SK-N-SH (cell line): ENCODE measurements at regions of chr2 and their contacts with region 1.

Region 1: DNA sequence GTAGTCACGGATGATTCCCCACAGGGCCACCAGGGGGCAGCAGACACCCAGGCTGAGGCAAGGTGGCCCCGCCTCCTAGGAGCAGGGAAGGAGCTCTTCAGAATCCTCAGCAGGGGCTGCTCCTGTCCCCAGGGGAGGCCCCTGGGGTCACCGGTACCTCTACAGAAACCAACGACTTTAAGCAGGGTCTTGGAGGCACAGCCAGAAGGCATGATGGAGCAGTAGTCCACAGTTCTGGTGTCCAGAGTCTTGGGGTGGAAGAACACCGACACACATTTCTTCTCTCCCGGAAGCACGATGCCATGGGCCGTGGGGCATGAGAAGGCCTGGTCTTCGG is 11.5 kb downstream of the CFAP65 start:
- DNase-seq: peak; percentile 93
- H3K4me3 ChIP-seq: peak overlapping the region in 1 of 2 experiments; percentile 49; a peak in 1 of 4 replicates
- H3K27ac ChIP-seq: no peak overlapping the region; a peak in 1 of 4 replicates
- H3K4me1 ChIP-seq: peaks cover 0 to 5% of the 10 kb centered on the region in 2 experiments; a peak in 1 of 4 replicates
- H3K27me3 ChIP-seq: peaks cover 18% of the 10 kb centered on the region; the same call in 1 of the 2 replicates
- CTCF ChIP-seq: peak; percentile 84
- EP300 ChIP-seq: no peak
- RAD21 ChIP-seq: peak; percentile 91

Region 2: DNA sequence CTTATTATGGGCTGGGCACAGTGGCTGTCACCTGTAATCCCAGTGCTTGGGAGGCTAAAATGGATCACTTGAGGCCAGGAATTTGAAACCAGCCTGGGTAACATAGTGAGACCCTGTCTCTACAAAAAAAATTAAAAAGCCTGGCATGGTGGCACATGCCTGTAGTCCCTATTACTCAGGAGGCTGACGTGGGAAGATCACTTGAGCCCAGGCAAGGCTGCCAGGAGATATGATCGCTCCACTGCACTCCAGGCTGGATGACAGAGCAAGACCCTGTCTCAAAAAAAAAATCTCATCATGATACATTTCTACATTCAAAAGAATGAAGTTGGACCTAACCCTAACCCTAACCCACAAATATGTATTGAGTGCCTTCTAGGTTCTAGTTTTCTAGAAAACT is 268.0 kb before region 1 on chr2:
- CTCF ChIA-PET with region 1: no interaction called
- POLR2A ChIA-PET with region 1: no interaction called
- DNase-seq: no peak
- H3K4me3 ChIP-seq: no peak overlapping the region
- H3K27ac ChIP-seq: no peak overlapping the region
- H3K4me1 ChIP-seq: no peaks in the 10 kb centered on the region
- H3K27me3 ChIP-seq: no peaks in the 10 kb centered on the region
- CTCF ChIP-seq: no peak
- EP300 ChIP-seq: no peak
- RAD21 ChIP-seq: no peak

Region 3: DNA sequence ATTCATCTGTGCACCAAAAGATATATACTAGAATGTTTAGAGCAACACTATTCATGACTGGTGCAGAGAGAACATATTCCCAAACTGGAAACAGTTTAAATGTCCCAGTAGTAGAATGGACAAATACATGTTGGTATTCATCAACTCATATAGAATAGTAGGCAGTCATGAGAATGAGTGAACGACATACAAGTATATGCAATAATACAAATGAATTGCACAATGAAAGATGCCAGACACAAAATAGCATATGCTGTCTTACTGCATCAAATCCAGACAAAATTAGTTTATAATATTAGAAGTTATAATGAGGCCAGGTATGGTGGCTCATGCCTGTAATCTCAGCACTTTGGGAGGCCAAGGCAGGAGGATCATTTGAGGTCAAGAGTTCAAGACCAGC is 189.9 kb before region 1 on chr2:
- CTCF ChIA-PET with region 1: no interaction called
- POLR2A ChIA-PET with region 1: no interaction called
- DNase-seq: no peak
- H3K4me3 ChIP-seq: no peak overlapping the region
- H3K27ac ChIP-seq: no peak overlapping the region
- H3K4me1 ChIP-seq: no peaks in the 10 kb centered on the region; a peak in 1 of 4 replicates
- H3K27me3 ChIP-seq: no peaks in the 10 kb centered on the region; the same call in 1 of the 2 replicates
- CTCF ChIP-seq: no peak
- EP300 ChIP-seq: no peak
- RAD21 ChIP-seq: no peak

Region 4: GRCh38 chr2:218876562-218877219 is 153.1 kb before region 1 on chr2:
- CTCF ChIA-PET with region 1: interaction called, 10 read pairs
- POLR2A ChIA-PET with region 1: no interaction called
- DNase-seq: peak; percentile 88
- H3K4me3 ChIP-seq: no peak overlapping the region
- H3K27ac ChIP-seq: peak overlapping the region in 1 of 2 experiments; percentile 78; a peak in 2 of 4 replicates
- H3K4me1 ChIP-seq: peaks cover 0 to 54% of the 10 kb centered on the region in 2 experiments; a peak in 2 of 4 replicates
- H3K27me3 ChIP-seq: peaks cover 39% of the 10 kb centered on the region
- CTCF ChIP-seq: peak; percentile 95
- EP300 ChIP-seq: peak in 1 of 2 experiments; percentile 26; a peak in 1 of 4 replicates
- RAD21 ChIP-seq: peak; percentile 95

Region 5: GRCh38 chr2:219002395-219003266 is 27.2 kb before region 1 on chr2:
- CTCF ChIA-PET with region 1: interaction called, 258 read pairs
- POLR2A ChIA-PET with region 1: interaction called, 4 read pairs
- DNase-seq: peak; percentile 89
- H3K4me3 ChIP-seq: peak overlapping the region; percentile 51 to 54
- H3K27ac ChIP-seq: peak overlapping the region in 1 of 2 experiments; percentile 99; a peak in 2 of 4 replicates
- H3K4me1 ChIP-seq: peaks cover 0 to 60% of the 10 kb centered on the region in 2 experiments; a peak in 2 of 4 replicates
- H3K27me3 ChIP-seq: peaks cover 18% of the 10 kb centered on the region; the same call in 1 of the 2 replicates
- CTCF ChIP-seq: peak; percentile 35; the same call in 1 of the 2 replicates
- EP300 ChIP-seq: no peak
- RAD21 ChIP-seq: peak; percentile 66

Region 6: GRCh38 chr2:219057709-219058540 is 28.1 kb after region 1 on chr2:
- CTCF ChIA-PET with region 1: interaction called, 59 read pairs
- POLR2A ChIA-PET with region 1: no interaction called
- DNase-seq: peak; percentile 86
- H3K4me3 ChIP-seq: peak overlapping the region in 1 of 2 experiments; percentile 35; a peak in 1 of 4 replicates
- H3K27ac ChIP-seq: no peak overlapping the region
- H3K4me1 ChIP-seq: peaks cover 0 to 16% of the 10 kb centered on the region in 2 experiments; a peak in 1 of 4 replicates
- H3K27me3 ChIP-seq: peaks cover 43% of the 10 kb centered on the region
- CTCF ChIP-seq: peak; percentile 78
- EP300 ChIP-seq: no peak
- RAD21 ChIP-seq: peak; percentile 77

Region 7: GRCh38 chr2:219099329-219099728 is 69.5 kb after region 1 on chr2:
- CTCF ChIA-PET with region 1: interaction called, 34 read pairs
- POLR2A ChIA-PET with region 1: interaction called, 4 read pairs
- DNase-seq: no peak
- H3K4me3 ChIP-seq: no peak overlapping the region
- H3K27ac ChIP-seq: no peak overlapping the region
- H3K4me1 ChIP-seq: no peaks in the 10 kb centered on the region
- H3K27me3 ChIP-seq: no peaks in the 10 kb centered on the region
- CTCF ChIP-seq: no peak
- EP300 ChIP-seq: no peak
- RAD21 ChIP-seq: no peak

Region 8: GRCh38 chr2:219125225-219125885 is 95.6 kb after region 1 on chr2:
- CTCF ChIA-PET with region 1: interaction called, 238 read pairs
- POLR2A ChIA-PET with region 1: no interaction called
- DNase-seq: no peak
- H3K4me3 ChIP-seq: no peak overlapping the region
- H3K27ac ChIP-seq: no peak overlapping the region
- H3K4me1 ChIP-seq: no peaks in the 10 kb centered on the region; a peak in 2 of 4 replicates
- H3K27me3 ChIP-seq: no peaks in the 10 kb centered on the region
- CTCF ChIP-seq: no peak
- EP300 ChIP-seq: no peak
- RAD21 ChIP-seq: no peak

Region 9: DNA sequence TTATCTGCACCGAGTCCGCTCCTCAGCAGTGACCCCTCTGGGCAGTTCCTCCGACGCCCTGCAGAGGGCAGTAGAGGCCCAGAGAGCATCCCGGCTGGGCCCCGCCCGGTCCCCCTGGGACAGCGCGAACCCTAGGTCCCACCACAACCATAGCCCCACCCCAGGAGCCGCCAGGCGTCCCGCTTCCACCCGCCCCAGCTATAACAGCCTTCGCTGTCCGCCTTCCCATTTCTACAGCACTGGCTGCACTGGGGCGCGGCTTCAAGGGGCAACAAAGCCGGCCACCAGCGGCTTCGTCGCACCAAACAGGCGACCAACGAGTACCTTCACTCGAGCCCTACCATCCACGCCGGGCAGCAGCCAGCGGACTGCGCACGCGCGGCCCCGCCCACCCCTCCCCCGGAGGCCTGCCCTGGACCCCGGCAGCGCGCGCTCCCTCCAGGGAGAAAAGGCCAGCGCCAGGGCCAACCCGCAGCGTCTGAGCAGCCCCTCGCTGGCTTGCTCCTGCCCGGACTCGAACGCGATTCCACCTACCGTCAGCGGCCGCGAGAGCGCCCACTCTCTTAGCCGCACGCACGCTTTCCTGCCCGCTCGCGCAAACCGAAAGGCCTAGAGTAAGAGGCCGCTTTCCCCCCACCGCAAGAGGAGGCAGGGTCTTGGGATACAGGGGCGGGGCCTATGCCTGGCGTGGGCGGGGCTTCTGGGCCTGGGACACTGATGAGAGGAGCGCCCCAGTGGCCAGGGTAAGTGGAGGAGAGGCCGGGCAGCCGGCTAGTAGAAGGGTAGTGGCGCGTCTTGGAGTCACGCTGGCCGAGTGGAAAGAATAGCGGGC is 130.6 kb after region 1 on chr2 and contains the start of gene NHEJ1:
- CTCF ChIA-PET with region 1: interaction called, 114 read pairs
- POLR2A ChIA-PET with region 1: no interaction called
- DNase-seq: peak; percentile 98
- H3K4me3 ChIP-seq: peak within 1 kb of the TSS; percentile 69 to 75
- H3K27ac ChIP-seq: peak within 1 kb of the TSS; percentile 90 to 99
- H3K4me1 ChIP-seq: peaks cover 0 to 11% of the 10 kb centered on the region in 2 experiments; a peak in 1 of 4 replicates
- H3K27me3 ChIP-seq: no peaks in the 10 kb centered on the region
- CTCF ChIP-seq: peak; percentile 96
- EP300 ChIP-seq: no peak
- RAD21 ChIP-seq: peak; percentile 81
- polyA plus RNA-seq, gene NHEJ1: 16.3 and 21.0 TPM in 2 replicates

Region 10: DNA sequence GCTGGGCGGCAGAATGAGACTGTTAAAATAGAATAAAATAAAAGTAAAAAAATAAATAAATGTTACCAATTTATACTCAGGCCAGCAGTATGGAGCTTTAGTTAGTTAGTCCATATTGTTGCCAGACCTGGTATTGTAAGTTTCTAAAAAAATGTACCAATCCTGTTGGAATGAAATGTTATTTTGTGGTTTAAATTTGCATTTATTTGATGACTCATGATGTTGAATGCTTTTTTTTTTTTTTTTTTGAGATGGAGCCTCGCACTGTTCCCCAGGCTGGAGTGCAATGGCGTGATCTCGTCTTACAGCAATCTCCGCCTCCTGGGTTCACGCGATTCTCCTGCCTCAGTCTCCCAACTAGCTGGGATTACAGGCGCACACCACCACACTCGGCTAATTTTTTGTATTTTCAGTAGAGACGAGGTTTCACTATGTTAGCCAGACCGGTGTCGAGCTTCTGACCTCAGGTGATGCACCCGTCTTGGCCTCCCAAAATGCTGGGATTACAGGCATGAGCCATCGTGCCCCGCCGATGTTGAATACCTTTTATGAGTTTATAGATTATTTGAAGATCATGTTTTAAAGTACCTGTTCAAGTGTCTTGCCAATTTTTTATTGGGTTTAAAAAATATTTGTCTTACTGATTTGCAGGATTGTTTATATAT is 285.1 kb after region 1 on chr2:
- CTCF ChIA-PET with region 1: no interaction called
- POLR2A ChIA-PET with region 1: no interaction called
- DNase-seq: no peak
- H3K4me3 ChIP-seq: no peak overlapping the region
- H3K27ac ChIP-seq: no peak overlapping the region
- H3K4me1 ChIP-seq: no peaks in the 10 kb centered on the region
- H3K27me3 ChIP-seq: no peaks in the 10 kb centered on the region
- CTCF ChIP-seq: no peak
- EP300 ChIP-seq: no peak
- RAD21 ChIP-seq: no peak